ENCODE measurements at regions of chr20 and their contacts with region 1.

Region 1: DNA sequence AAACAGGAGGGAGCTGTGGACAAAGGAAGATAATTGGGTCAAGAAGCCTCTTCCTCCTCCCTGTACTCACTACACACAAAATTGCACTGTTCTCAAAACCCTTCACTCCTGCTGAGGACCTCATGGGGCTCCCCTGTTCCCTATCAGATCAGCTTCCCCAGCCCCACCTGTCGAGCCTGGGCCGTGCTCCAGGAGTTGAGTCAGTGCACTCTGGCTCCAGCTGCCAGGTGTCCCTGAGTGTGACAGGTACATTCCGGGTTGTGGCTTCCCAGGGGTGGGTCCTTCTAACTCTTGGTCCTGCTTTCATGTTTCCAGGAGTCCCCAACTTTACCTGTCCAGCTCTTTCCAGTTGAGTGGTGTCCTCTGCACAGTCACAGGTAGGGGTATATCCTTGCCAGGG is 8.4 kb downstream of the RAB5IF start:
- DNase-seq: no peak
- ATAC-seq: no peak
- H3K4me3 Mint-ChIP-seq: no peak overlapping the region
- H3K27ac Mint-ChIP-seq: no peak overlapping the region
- H3K4me1 Mint-ChIP-seq: no peaks in the 10 kb centered on the region
- H3K27me3 Mint-ChIP-seq: no peaks in the 10 kb centered on the region
- CTCF ChIP-seq: no peak

Region 2: GRCh38 chr20:36624068-36624943 is 10.3 kb after region 1 on chr20:
- CTCF ChIA-PET with region 1: interaction called, 12 read pairs
- POLR2A ChIA-PET with region 1: no interaction called
- DNase-seq: peak; percentile 22
- ATAC-seq: peak; percentile 88
- H3K4me3 Mint-ChIP-seq: no peak overlapping the region
- H3K27ac Mint-ChIP-seq: peak overlapping the region; percentile 0; the same call in 1 of the 2 replicates
- H3K4me1 Mint-ChIP-seq: peaks cover 9% of the 10 kb centered on the region
- H3K27me3 Mint-ChIP-seq: no peaks in the 10 kb centered on the region
- CTCF ChIP-seq: no peak

Region 3: DNA sequence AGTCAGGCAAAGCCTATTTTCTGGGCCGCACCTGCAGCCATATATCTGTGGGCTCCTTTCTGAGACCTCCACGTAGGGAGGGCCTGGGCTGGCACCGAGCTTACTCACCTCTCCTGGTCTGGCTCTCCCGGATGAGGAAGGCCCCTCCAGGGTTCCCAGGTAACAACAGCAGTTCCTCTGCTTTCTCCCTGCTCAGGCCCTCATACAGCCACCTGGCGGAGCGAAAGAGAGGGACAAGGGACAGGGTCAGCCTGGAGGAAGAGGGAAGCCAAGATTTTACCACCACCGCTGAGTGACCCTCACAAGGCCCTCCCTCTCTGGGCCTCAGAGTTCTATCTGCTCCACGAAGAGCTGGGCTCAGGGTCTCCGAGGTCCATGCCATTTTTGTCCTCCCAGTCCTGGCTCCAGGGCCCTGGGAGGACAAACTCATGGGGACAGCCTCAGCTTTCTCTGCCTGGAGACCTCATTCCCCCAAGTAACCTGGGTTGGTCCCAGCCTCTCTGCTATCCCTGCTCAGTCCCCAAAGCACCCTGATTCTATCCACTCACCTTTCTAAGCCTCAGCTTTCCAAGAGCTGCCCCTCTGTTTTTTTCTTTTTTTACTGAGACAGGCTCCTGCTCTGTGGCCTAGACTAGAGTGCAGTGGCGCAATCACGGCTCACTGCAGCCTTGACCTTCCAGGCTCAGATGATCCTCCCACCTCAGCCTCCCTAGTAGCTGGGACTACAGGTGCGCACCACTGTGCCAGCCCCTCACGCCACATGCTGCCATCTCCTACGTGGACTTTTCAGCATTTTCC is 18.7 kb after region 1 on chr20:
- CTCF ChIA-PET with region 1: interaction called, 13 read pairs
- POLR2A ChIA-PET with region 1: no interaction called
- DNase-seq: peak; percentile 70
- ATAC-seq: peak; percentile 95
- H3K4me3 Mint-ChIP-seq: no peak overlapping the region
- H3K27ac Mint-ChIP-seq: no peak overlapping the region
- H3K4me1 Mint-ChIP-seq: 0 out of 2 replicates have a peak, but pooled peaks cover 3% of the 10 kb centered on the region
- H3K27me3 Mint-ChIP-seq: no peaks in the 10 kb centered on the region; the same call in 1 of the 2 replicates
- CTCF ChIP-seq: no peak

Region 4: GRCh38 chr20:36728986-36729385 is 115.0 kb after region 1 on chr20:
- CTCF ChIA-PET with region 1: interaction called, 16 read pairs
- POLR2A ChIA-PET with region 1: no interaction called
- DNase-seq: no peak
- ATAC-seq: peak; percentile 86
- H3K4me3 Mint-ChIP-seq: no peak overlapping the region
- H3K27ac Mint-ChIP-seq: peak overlapping the region; percentile 34
- H3K4me1 Mint-ChIP-seq: peaks cover 13% of the 10 kb centered on the region
- H3K27me3 Mint-ChIP-seq: no peaks in the 10 kb centered on the region
- CTCF ChIP-seq: no peak